Dorsolateral prefrontal cortex (tissue), 120 donors: ENCODE measurements at regions of chr3 and their contacts with region 1.

Region 1: DNA sequence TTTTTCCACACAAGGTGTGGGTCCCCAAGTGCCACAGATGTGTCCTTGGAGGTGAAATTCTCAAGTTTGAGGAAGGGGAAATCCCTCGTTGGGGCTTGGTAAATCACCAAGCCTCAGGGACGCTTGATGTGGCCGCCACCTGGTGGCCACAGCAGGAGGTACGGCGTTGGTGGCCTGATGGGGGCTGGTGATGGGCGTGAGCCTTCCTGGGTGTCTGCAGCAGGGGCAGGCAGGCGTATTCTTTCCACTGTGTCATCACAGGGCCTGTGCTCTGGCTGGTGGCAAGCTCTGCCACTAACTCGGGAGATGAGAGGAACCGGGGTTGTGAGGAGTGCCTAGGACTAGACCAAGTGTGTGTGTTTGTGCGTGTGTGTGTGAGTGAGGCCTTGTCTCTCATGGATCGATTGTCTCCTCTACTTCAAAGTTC is 4.2 kb downstream of the ACOX2 start:
- DNase-seq: peak in 8 of 10 donors; percentile 68 to 82 (median 72)
- H3K4me3 ChIP-seq: no peak overlapping the region
- H3K27ac ChIP-seq: no peak overlapping the region
- H3K27me3 ChIP-seq: no peaks in the 10 kb centered on the region
- CTCF ChIP-seq: peak; percentile 77 to 99 (median 95)

Region 2: GRCh38 chr3:58177747-58178527 is 354.9 kb before region 1 on chr3:
- intact Hi-C with region 1: loop called in 1 of 2 experiments (anchors 5 kb)
- DNase-seq: peak; percentile 82 to 93 (median 89)
- H3K4me3 ChIP-seq: peak overlapping the region; percentile 34 to 75 (median 59)
- H3K27ac ChIP-seq: peak overlapping the region in 5 of 59 donors; percentile 25 to 75 (median 59)
- H3K27me3 ChIP-seq: no peaks in the 10 kb centered on the region
- CTCF ChIP-seq: peak; percentile 79 to 98 (median 94)

Region 3: GRCh38 chr3:58305882-58306711 is 226.7 kb before region 1 on chr3 and contains the starts of genes HTD2 and RPP14:
- intact Hi-C with region 1: loop called (anchors 1 to 2 kb)
- DNase-seq: peak; percentile 95 to 99 (median 98)
- H3K4me3 ChIP-seq: peak within 1 kb of the TSS; percentile 59 to 98 (median 86)
- H3K27ac ChIP-seq: peak within 1 kb of the TSS; percentile 83 to 100 (median 99)
- H3K27me3 ChIP-seq: no peaks in the 10 kb centered on the region
- CTCF ChIP-seq: peak; percentile 94 to 100 (median 98)
- total RNA-seq, gene HTD2: 5.0 to 23.1 (median 11.3) TPM
- total RNA-seq, gene RPP14: 10.7 to 30.0 (median 19.1) TPM

Region 4: GRCh38 chr3:58332575-58333188 is 200.1 kb before region 1 on chr3 and contains the start of gene PXK:
- intact Hi-C with region 1: loop called in 1 of 2 experiments (anchors 5 kb)
- DNase-seq: peak; percentile 76 to 96 (median 83)
- H3K4me3 ChIP-seq: peak within 1 kb of the TSS; percentile 57 to 95 (median 82)
- H3K27ac ChIP-seq: peak within 1 kb of the TSS; percentile 71 to 99 (median 93)
- H3K27me3 ChIP-seq: no peaks in the 10 kb centered on the region
- CTCF ChIP-seq: peak in 48 of 56 donors; percentile 10 to 65 (median 44)
- total RNA-seq, gene PXK: 55.2 to 497 (median 130) TPM

Region 5: DNA sequence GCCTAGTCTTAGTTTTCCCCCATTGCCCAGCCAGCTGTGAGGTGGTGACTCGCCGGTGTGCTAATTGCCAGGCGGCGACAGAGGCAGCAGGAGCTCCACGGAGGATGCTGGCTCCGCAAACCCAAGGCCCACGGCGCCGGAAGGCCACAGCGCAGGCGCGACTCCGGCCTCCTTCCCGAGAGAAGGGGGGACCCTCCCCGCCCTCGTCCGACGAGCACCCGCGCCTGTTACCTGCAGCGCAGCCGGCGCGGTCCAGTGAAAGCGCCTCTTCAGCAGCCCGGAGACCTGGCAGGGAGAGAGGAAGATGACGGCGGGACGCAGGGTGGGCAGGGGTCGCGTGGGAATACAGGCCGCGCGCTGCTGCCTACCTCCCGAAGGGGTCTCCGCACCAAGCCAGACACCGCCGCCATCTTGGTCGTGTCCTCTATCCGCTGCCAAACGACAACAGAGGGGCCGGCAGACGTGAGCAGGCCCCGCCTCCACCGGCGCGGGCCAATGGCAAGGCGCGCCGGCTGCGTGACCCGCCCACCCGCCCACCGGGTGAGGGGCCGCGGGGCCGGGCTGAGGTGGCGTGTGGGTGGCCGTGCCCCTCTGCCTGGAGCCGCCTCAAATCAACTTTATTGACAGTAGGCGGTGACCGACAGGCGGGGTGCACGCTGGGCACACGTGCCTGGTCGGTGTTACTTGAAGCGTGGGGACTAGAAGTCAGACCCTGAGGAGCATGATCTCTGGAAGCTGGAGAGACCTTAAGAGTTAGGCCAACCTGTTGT is 99.2 kb before region 1 on chr3 and contains the start of gene PDHB:
- intact Hi-C with region 1: loop called (anchors 5 to 10 kb)
- DNase-seq: peak; percentile 86 to 95 (median 90)
- H3K4me3 ChIP-seq: peak within 1 kb of the TSS; percentile 51 to 97 (median 82)
- H3K27ac ChIP-seq: peak within 1 kb of the TSS; percentile 81 to 100 (median 97)
- H3K27me3 ChIP-seq: no peaks in the 10 kb centered on the region
- CTCF ChIP-seq: peak in 34 of 56 donors; percentile 1 to 53 (median 27)
- total RNA-seq, gene PDHB: 33.2 to 82.3 (median 62.6) TPM

Region 6: DNA sequence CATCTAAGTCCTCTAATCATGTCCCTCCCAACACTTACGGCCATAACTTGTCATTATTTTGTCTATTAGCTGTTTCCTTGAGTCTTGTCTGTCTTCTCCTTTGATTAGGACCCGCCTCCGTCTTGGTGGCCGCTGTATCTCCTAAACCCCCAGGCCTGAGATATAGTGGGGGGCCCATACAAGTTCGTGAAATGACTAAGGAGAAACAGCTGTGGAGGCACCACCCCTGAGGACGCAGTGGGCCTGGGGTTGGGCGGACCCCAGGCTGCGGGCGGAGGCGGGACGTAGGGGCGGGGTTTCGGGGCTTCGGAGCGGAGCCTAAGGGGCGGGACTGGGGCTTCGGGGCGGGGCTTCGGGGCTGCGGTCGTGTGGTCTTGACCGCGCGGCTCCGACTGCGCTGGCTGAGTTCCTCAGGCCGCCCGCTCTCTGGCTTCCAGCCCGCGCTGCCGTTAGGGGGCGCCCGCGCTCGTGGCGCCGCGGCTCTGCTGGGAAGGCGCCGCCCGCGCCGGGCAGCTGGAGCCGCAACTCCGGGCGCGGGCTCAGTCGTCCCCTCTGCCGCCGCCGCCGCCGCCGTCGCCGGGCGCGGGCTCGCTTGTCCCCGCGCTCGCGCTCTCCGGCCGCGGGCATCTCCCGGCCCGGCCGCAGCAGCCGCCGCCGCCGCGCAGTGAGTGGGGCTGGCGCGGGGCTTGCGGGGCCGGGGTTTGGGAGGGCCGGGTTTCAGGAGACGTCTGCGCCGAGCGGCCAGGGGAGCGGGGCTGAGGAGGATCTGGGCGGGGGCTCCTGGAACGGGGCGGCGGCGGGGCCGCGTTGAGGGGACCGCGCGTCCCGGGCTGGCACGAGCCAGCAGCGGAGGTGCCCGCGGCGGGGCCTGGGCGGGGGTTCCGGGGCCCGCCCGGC is 41.1 kb before region 1 on chr3 and contains the start of gene KCTD6:
- intact Hi-C with region 1: loop called (anchors 2 kb)
- DNase-seq: peak; percentile 75 to 94 (median 82)
- H3K4me3 ChIP-seq: peak within 1 kb of the TSS; percentile 55 to 94 (median 84)
- H3K27ac ChIP-seq: peak within 1 kb of the TSS; percentile 60 to 93 (median 85)
- H3K27me3 ChIP-seq: no peaks in the 10 kb centered on the region
- CTCF ChIP-seq: peak in 55 of 56 donors; percentile 46 to 90 (median 71)
- total RNA-seq, gene KCTD6: 21.0 to 44.7 (median 30.4) TPM

Region 7: DNA sequence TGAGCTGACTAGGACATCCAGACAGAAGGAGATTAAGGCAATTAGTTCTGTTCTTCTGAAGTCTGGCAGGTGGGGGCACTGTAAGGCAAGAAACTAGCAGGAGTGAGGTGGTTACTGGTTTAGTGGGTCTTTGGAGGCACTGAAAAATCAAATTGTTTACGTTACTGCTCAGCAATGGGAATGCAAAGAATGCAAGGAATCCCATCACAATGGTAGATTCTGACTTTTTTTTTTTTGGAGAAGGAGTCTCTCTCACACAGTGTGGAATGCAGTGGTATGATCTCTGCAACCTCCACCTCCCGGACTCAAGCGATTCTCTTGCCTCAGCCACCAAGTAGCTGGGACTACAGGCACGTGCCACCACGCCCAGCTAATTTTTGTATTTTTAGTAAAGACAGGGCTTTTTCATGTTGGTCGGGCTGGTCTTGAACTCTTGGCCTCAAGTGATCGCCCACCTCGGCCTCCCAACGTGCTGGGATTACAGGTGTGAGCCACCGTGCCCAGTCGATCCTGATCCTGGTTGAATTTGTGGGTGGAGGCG is 28.0 kb after region 1 on chr3:
- intact Hi-C with region 1: no loop called
- DNase-seq: no peak
- H3K4me3 ChIP-seq: no peak overlapping the region
- H3K27ac ChIP-seq: peak overlapping the region in 1 of 59 donors; percentile 32
- H3K27me3 ChIP-seq: no peaks in the 10 kb centered on the region
- CTCF ChIP-seq: peak in 15 of 56 donors; percentile 9 to 41 (median 25)

Region 8: GRCh38 chr3:58591517-58592510 is 59.0 kb after region 1 on chr3:
- intact Hi-C with region 1: no loop called
- DNase-seq: no peak
- H3K4me3 ChIP-seq: no peak overlapping the region
- H3K27ac ChIP-seq: no peak overlapping the region
- H3K27me3 ChIP-seq: peaks cover 0 to under 1% (median 0%) of the 10 kb centered on the region in 45 donors
- CTCF ChIP-seq: no peak